ENCODE measurements at regions of chr20 and their contacts with region 1.

Region 1: DNA sequence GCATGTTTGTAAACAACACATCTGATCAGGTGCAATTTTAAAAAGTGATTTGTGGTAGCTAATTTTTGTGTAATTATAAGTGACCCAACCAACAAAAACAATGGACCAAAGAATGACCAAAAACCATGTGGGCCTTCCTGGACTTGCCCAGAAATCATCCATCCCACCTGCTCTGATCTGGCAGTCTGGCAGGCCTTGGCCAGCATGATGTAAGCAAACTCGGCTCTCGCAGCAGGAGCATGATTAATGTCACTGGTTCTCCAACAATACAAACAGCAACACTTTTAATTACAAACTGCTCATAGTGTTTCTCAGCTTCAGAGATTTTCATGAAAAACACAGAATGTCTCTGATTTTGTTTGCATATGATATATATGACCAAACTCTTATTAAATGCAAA is 16.1 kb downstream of the TP53INP2 start:
- DNase-seq: no peak
- ATAC-seq: peak; percentile 49
- H3K4me3 ChIP-seq: no peak overlapping the region; the same call in 1 of the 2 replicates
- H3K27ac ChIP-seq: peak overlapping the region; percentile 79
- H3K4me1 ChIP-seq: peaks cover 37% of the 10 kb centered on the region
- H3K27me3 ChIP-seq: no peaks in the 10 kb centered on the region
- CTCF ChIP-seq: no peak
- EP300 ChIP-seq: no peak
- POLR2A ChIP-seq: no peak
- RAD21 ChIP-seq: no peak

Region 2: GRCh38 chr20:34732523-34732922 is 12.3 kb after region 1 on chr20:
- CTCF ChIA-PET with region 1: interaction called, 12 read pairs
- POLR2A ChIA-PET with region 1: interaction called, 6 read pairs
- RAD21 ChIA-PET with region 1: interaction called, 4 read pairs
- SMC1A ChIA-PET with region 1: interaction called, 14 read pairs
- in situ Hi-C with region 1: no loop called
- intact Hi-C with region 1: no loop called
- DNase-seq: no peak
- ATAC-seq: no peak
- H3K4me3 ChIP-seq: no peak overlapping the region
- H3K27ac ChIP-seq: no peak overlapping the region
- H3K4me1 ChIP-seq: no peaks in the 10 kb centered on the region
- H3K27me3 ChIP-seq: no peaks in the 10 kb centered on the region
- CTCF ChIP-seq: no peak
- EP300 ChIP-seq: no peak
- POLR2A ChIP-seq: no peak
- RAD21 ChIP-seq: no peak

Region 3: GRCh38 chr20:34747479-34747878 is 27.2 kb after region 1 on chr20:
- CTCF ChIA-PET with region 1: interaction called, 3 read pairs
- POLR2A ChIA-PET with region 1: interaction called, 4 read pairs
- RAD21 ChIA-PET with region 1: interaction called, 21 read pairs
- SMC1A ChIA-PET with region 1: interaction called, 41 read pairs
- in situ Hi-C with region 1: no loop called
- intact Hi-C with region 1: no loop called
- DNase-seq: no peak
- ATAC-seq: peak; percentile 69
- H3K4me3 ChIP-seq: 0 out of 2 replicates have a peak overlapping the region, but pooled peaks have one; percentile 8
- H3K27ac ChIP-seq: peak overlapping the region; percentile 80
- H3K4me1 ChIP-seq: peaks cover 11% of the 10 kb centered on the region
- H3K27me3 ChIP-seq: no peaks in the 10 kb centered on the region
- CTCF ChIP-seq: no peak
- EP300 ChIP-seq: no peak
- POLR2A ChIP-seq: no peak
- RAD21 ChIP-seq: no peak

Region 4: DNA sequence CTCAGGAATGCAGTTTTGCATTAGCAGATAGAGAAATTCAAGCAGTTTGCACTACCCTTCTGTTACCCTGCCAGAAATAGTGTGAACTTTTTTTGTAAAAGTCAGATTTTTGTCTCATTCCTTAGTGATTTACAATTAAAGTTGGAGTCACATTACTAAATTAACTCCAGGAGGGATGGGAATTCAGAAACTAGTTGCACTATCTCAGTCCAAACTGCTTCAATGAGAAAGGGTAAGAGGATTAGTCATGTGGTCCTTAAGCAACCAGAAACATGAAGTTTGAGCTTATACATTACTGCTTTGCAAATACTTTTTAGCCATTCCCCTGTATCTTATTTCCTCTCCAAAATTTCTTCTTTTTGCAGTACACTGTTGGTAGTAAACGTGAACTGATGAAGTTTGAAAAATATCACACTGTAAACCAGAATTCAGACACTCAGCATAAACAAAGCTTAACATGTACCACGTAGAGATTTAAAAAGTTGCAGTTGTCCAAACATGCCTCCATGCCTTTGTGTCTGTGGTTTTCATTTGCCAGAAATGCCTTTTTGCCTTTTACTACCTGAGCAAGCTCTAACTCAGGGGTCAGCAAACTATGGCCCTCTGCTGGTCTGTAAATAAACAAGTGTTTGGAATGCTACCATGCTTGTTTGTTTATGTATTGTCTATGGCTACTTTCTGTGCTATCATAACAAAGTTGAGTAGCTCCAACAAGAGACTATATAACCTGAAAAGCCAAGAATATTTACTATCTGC is 33.6 kb after region 1 on chr20:
- CTCF ChIA-PET with region 1: interaction called, 14 read pairs
- POLR2A ChIA-PET with region 1: interaction called, 7 read pairs
- RAD21 ChIA-PET with region 1: interaction called, 21 read pairs
- SMC1A ChIA-PET with region 1: interaction called, 41 read pairs
- in situ Hi-C with region 1: no loop called
- intact Hi-C with region 1: loop called (anchors 1 kb)
- DNase-seq: no peak
- ATAC-seq: no peak
- H3K4me3 ChIP-seq: no peak overlapping the region
- H3K27ac ChIP-seq: peak overlapping the region; percentile 73
- H3K4me1 ChIP-seq: peaks cover 24% of the 10 kb centered on the region
- H3K27me3 ChIP-seq: no peaks in the 10 kb centered on the region
- CTCF ChIP-seq: peak; percentile 18 to 28 (median 20); a peak in 3 of 6 replicates
- EP300 ChIP-seq: no peak
- POLR2A ChIP-seq: no peak
- RAD21 ChIP-seq: peak; percentile 50